Right cardiac atrium (tissue), 5 donors: ENCODE measurements at regions of chr17 and their contacts with region 1.

Region 1: DNA sequence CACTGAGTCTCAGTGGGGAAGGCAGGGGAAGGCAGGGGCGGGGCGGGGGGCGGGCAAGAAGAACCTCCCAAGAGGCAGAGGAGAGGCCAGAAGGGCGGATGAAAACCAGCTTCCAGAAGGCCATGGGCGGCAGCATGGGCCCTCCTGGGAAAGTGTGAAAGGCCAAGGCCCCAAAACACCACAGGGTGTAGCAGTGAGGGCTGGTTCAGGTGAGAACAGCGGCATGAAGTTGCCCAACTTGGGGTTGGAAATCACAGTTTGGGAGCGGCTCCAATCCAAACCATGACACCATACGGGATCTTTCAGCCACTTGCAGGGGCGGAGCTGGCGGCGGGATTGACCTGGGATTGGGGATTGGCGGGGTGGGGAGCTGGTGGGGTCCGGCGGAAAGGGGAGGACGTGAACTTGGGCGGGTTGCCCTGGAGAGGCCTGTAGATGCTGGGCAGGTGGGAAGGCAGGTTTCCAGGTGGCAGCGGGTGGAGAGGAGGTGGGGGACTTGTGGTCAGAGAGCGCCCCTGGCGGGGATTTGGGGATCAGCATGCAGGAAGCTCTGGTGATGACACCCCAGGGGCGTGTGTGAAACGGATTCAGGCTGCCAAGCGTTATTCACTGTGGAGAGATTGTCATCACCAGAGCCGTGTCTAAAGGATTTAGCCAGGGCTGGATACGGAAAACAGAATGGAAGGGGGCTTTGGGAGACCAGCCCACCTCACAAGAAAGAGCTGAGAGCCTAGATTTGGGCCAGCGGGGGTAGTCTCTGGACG is 80.9 kb downstream of the ARHGAP23 start:
- DNase-seq: peak; percentile 85 to 92 (median 92)
- ATAC-seq: peak; percentile 68 to 71
- H3K4me3 ChIP-seq: no peak overlapping the region
- H3K27ac ChIP-seq: no peak overlapping the region
- H3K4me1 ChIP-seq: peaks cover 7% of the 10 kb centered on the region
- H3K27me3 ChIP-seq: no peaks in the 10 kb centered on the region

Region 2: GRCh38 chr17:38584350-38584925 is 75.2 kb after region 1 on chr17:
- intact Hi-C with region 1: loop called in 1 of 4 experiments (anchors 10 kb)
- DNase-seq: peak; percentile 66 to 81 (median 79)
- ATAC-seq: peak; percentile 82 to 85
- H3K4me3 ChIP-seq: no peak overlapping the region
- H3K27ac ChIP-seq: no peak overlapping the region
- H3K4me1 ChIP-seq: no peaks in the 10 kb centered on the region
- H3K27me3 ChIP-seq: no peaks in the 10 kb centered on the region